Activated CD8-positive, alpha-beta T cell treated with anti-CD3 and anti-CD28 coated beads for 36 hours (primary cell): ENCODE measurements at regions of chr4 and their contacts with region 1.

Region 1: DNA sequence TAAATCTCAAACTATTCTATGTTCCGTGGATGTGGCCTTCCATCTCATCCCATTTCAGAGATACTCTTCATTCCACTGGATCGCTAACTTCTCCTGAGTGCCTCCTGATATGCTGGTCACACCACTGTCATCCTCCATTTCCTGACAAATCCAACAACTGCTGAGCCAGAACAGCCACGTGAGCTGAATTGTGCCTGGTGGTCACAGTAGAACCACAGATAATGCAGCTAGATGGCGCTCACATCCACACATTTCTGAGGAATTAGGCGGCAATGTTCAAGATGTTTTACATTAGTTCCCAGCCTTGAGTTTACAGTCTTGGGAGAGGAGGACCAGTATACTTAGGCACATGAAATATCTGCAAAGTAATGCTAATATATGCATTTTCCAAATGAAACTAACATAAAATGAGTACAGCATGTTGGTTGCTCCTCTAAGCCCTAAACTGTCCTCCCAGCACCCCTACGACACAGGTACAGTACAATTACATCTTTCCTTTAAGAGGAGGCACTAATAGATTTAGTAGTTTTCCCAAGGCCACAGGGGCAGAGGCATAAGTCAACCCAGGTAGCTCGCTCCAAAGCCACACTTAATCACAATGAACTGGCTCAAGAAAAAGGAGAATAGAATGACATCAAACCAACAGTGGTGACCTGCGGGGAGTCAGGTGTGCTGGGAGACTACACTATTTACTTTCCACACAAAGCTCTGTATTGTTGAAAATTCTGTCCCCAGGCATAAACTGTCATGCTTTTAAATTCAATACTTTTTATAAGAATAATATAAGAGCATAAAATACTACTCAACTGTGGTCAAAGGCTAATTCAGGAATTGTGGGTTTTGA is 134.2 kb downstream of the CHIC2 start:
- DNase-seq: peak; percentile 82
- ATAC-seq: peak; percentile 77
- H3K4me3 Mint-ChIP-seq: no peak overlapping the region
- H3K27ac Mint-ChIP-seq: no peak overlapping the region
- H3K4me1 Mint-ChIP-seq: no peaks in the 10 kb centered on the region
- H3K27me3 Mint-ChIP-seq: no peaks in the 10 kb centered on the region
- CTCF ChIP-seq: peak; percentile 77

Region 2: GRCh38 chr4:53802500-53802899 is 127.7 kb before region 1 on chr4:
- CTCF ChIA-PET with region 1: no interaction called
- POLR2A ChIA-PET with region 1: no interaction called
- intact Hi-C with region 1: no loop called
- DNase-seq: no peak
- ATAC-seq: no peak
- H3K4me3 Mint-ChIP-seq: no peak overlapping the region
- H3K27ac Mint-ChIP-seq: no peak overlapping the region
- H3K4me1 Mint-ChIP-seq: no peaks in the 10 kb centered on the region
- H3K27me3 Mint-ChIP-seq: peaks cover 1% of the 10 kb centered on the region
- CTCF ChIP-seq: no peak

Region 3: GRCh38 chr4:53943345-53944085 is 13.3 kb after region 1 on chr4:
- CTCF ChIA-PET with region 1: interaction called, 10 read pairs
- POLR2A ChIA-PET with region 1: no interaction called
- intact Hi-C with region 1: no loop called
- DNase-seq: no peak
- ATAC-seq: no peak
- H3K4me3 Mint-ChIP-seq: no peak overlapping the region
- H3K27ac Mint-ChIP-seq: no peak overlapping the region
- H3K4me1 Mint-ChIP-seq: no peaks in the 10 kb centered on the region
- H3K27me3 Mint-ChIP-seq: peaks cover 3% of the 10 kb centered on the region
- CTCF ChIP-seq: no peak

Region 4: GRCh38 chr4:54093324-54094240 is 163.4 kb after region 1 on chr4:
- CTCF ChIA-PET with region 1: interaction called, 10 read pairs
- POLR2A ChIA-PET with region 1: no interaction called
- intact Hi-C with region 1: loop called (anchors 5 kb)
- DNase-seq: peak; percentile 76
- ATAC-seq: peak; percentile 39
- H3K4me3 Mint-ChIP-seq: peak overlapping the region; percentile 57
- H3K27ac Mint-ChIP-seq: no peak overlapping the region
- H3K4me1 Mint-ChIP-seq: peaks cover 37% of the 10 kb centered on the region
- H3K27me3 Mint-ChIP-seq: peaks cover 71% of the 10 kb centered on the region
- CTCF ChIP-seq: no peak

Region 5: DNA sequence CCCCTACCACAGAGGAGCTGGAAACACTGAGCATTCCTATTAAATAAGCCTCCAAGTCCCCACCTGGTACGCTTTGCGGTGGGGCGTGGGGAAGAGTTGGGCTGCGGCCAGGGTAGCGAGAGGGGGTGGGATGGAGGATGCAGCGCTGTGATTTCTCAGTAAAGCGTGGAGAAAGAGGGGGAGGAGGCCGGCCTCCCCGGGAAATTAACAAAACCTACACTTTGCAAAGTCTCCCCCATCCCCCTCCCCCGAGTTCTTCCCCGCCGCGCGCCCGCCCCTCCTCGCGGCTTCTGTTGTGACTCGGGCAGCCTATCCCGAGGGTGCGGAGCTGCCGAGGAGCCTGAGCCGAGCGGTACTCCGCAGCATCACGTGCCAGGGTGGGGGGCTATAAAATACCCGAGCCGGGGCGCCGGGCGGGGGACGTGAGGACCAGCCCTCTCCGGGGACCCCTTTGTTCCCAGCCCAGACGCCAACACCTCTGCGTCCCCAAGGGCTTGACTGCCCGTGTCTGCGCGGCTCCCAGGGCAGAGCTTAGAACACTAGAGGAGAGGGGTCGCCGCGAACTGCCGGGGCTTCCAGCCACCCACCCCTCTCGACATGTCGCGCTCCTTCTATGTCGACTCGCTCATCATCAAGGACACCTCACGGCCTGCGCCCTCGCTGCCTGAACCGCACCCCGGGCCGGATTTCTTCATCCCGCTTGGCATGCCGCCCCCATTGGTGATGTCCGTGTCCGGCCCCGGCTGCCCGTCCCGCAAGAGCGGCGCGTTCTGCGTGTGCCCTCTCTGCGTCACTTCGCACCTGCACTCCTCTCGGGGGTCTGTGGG is 169.8 kb after region 1 on chr4 and contains the start of gene GSX2:
- CTCF ChIA-PET with region 1: interaction called, 10 read pairs
- POLR2A ChIA-PET with region 1: no interaction called
- intact Hi-C with region 1: loop called (anchors 5 kb)
- DNase-seq: no peak
- ATAC-seq: peak; percentile 28
- H3K4me3 Mint-ChIP-seq: peak within 1 kb of the TSS; percentile 59
- H3K27ac Mint-ChIP-seq: no peak within 1 kb of the TSS
- H3K4me1 Mint-ChIP-seq: peaks cover 57% of the 10 kb centered on the region
- H3K27me3 Mint-ChIP-seq: peaks cover 89% of the 10 kb centered on the region
- CTCF ChIP-seq: no peak
- total RNA-seq, gene GSX2: not detected

Region 6: DNA sequence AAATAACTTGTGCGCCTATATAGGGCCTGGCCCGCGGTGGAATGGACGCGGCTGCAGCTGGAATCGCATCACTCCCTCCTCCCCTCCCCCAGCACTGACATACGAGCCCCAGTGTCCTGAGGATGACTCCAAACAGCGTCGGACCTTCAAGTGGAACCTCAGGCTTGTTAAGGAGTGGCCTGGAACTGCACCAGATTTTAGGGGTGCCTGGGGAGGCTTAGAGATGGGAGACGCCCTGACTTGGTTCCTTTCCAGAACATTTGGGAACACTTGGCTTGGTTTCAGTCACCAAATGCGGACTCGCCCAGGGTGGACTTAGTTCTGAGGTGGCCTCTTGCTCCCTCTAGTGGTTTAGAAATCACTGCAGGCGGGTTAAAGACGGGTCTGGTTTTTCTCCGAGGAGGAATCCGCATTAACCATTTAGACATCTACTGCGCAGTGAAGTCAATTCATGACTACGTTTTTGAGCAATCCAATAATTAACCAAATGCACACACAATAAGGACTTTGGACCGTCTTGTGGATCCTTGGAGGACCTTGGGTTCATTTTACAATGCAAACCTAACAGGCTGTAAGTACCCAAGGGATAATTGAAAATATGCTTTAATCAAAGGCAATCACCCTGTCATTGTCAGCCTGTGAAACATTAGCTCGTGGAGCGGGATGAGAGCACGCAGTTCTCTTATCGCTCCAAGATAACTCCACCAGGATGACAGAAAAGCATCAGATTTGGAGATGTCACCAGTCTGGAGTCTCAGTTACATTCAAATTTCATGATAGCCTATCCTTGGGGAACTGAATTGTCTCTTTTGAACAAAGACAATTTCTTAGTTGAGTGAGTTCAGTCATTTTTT is 287.7 kb after region 1 on chr4:
- CTCF ChIA-PET with region 1: interaction called, 116 read pairs
- POLR2A ChIA-PET with region 1: no interaction called
- intact Hi-C with region 1: loop called (anchors 2 kb)
- DNase-seq: peak; percentile 67
- ATAC-seq: peak; percentile 83
- H3K4me3 Mint-ChIP-seq: peak overlapping the region; percentile 42
- H3K27ac Mint-ChIP-seq: no peak overlapping the region
- H3K4me1 Mint-ChIP-seq: peaks cover 3% of the 10 kb centered on the region
- H3K27me3 Mint-ChIP-seq: peaks cover 28% of the 10 kb centered on the region
- CTCF ChIP-seq: peak; percentile 89